ENCODE measurements at regions of chr1 and their contacts with region 1.

Region 1: DNA sequence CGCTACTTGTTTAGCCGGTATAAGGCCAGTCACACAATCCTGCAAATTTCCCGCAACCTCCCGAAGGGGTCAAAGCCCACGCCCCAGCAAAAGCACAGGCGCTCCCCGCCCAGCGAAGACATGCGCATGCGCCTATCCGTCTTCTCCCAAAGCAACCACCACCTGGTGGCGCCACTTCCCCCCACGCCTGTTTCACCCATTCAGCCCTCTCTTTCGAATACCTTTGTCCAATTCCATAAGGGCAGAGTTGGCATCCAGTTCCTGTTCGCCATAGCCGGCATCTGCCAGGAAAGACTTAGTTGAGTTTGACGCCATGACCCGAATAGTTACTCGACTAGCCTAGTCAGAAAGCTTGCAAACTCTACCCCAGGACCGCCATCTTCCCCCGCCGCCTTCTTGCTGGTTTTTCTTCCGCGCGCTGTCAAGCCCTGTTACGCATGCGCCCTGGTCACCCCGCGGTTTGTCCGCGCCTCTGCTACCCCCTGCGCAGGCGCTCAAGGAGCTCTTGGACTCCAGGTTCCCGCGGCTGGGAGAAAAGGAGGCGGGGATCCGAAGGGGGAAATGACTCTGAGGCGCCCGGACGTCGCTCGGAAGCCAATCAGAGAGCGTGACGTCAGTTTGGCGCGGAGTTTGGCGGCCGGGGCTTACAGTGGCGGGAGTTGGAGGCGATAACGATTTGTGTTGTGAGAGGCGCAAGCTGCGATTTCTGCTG is at the starts of genes DTL and INTS7:
- DNase-seq: peak; percentile 98 to 99
- ATAC-seq: peak; percentile 97 to 99 (median 98)
- H3K4me3 ChIP-seq: peak within 1 kb of the TSS; percentile 40 to 73 (median 62)
- H3K27ac ChIP-seq: peak within 1 kb of the TSS; percentile 15 to 91 (median 86)
- H3K4me1 ChIP-seq: peaks cover 2 to 62% (median 30%) of the 10 kb centered on the region in 9 donors
- H3K27me3 ChIP-seq: no peaks in the 10 kb centered on the region
- CTCF ChIP-seq: peak; percentile 83 to 99 (median 96)
- total RNA-seq, gene DTL: 0.18 to 3.0 (median 0.58) TPM
- total RNA-seq, gene INTS7: 6.6 to 11.6 (median 9.0) TPM

Region 2: DNA sequence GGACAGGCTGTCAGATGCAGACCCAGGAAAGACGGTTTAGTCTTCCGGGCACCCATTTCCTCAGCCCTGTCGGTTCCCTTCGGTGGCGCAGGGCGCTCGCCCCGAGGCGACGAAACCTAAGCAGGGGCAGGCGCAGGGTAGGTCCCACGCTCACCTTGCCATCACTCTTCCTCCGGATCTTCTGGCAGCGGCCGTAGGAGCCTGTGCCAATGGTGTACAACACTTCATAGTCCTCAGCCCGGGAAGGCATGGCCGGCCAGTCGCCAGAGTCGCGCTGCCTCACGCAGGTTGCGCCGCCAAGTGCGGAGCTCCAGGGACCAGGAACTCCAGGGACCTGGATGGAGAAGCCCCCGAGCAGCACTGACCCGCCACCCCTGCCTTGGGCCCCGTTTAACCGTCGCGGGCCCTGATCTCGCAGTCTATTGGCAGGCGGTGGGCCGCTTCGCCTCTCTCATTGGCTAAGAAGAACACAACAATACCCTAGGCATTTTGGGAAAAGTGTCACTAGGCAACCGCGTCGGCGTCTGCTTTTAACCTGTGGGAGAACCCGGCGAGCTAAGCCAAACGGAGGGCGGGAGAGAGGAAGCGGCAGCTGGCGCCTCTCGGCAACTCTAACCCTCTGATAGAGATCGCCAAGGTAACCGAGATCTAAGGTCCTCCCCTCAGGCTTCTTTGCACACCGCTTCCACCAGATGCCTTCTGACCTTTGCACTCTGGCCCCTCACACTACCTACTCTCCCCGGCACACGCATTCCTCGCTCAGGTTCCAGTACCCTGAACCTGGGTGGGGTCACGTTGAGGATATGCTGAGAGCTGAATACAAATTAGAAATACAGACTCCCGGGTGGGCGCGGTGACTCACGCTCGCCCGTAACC is 359.8 kb before region 1 on chr1 and contains the start of gene NEK2:
- intact Hi-C with region 1: loop called in 5 of 10 experiments (anchors 5 to 10 kb)
- DNase-seq: peak; percentile 83 to 90
- ATAC-seq: peak; percentile 96 to 99 (median 98)
- H3K4me3 ChIP-seq: peak within 1 kb of the TSS; percentile 34 to 71 (median 58)
- H3K27ac ChIP-seq: peak within 1 kb of the TSS in 1 of 10 donors; percentile 22
- H3K4me1 ChIP-seq: peaks cover 0 to 18% (median 8%) of the 10 kb centered on the region in 9 donors
- H3K27me3 ChIP-seq: no peaks in the 10 kb centered on the region
- CTCF ChIP-seq: no peak
- total RNA-seq, gene NEK2: 0.12 to 2.1 (median 0.23) TPM in 5 of 10 donors, not detected in the others

Region 3: DNA sequence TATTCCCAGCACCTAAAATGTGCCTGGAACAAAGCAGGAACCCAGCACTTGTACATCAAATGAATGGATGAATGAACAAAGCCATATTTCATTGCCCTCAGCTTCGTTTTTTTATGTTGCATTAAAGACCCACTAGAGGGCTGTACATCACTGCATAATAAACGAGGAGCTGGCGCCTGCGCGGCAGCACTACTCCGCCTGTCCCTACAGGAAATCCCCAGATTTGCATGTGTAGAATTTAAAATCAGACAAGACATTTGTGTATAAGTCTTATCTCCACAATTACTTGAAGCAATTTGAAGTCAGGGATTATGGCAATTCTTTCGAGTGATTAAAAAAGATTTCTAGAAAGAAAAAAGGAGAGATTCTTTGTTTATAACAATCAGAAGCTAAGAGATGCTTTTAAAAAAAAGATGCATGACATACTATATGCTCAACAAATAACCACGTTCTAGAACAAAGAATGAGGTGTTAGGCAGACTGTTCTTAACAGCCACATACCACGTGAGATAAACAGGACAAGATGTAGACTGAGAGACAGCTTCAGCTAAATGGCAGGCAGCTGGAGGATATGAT is 354.4 kb before region 1 on chr1:
- intact Hi-C with region 1: loop called in 5 of 10 experiments (anchors 5 to 10 kb)
- DNase-seq: peak; percentile 52
- ATAC-seq: peak; percentile 69 to 92 (median 89)
- H3K4me3 ChIP-seq: no peak overlapping the region
- H3K27ac ChIP-seq: no peak overlapping the region
- H3K4me1 ChIP-seq: peaks cover 0 to 10% (median 2%) of the 10 kb centered on the region in 9 donors
- H3K27me3 ChIP-seq: no peaks in the 10 kb centered on the region
- CTCF ChIP-seq: peak; percentile 41 to 78 (median 75)

Region 4: GRCh38 chr1:211830330-211831142 is 204.7 kb before region 1 on chr1 and contains the start of gene LPGAT1:
- intact Hi-C with region 1: loop called in 2 of 10 experiments (anchors 10 kb)
- DNase-seq: peak; percentile 77 to 82
- ATAC-seq: peak; percentile 94 to 97 (median 96)
- H3K4me3 ChIP-seq: peak within 1 kb of the TSS; percentile 63 to 80 (median 74)
- H3K27ac ChIP-seq: peak within 1 kb of the TSS; percentile 70 to 97 (median 91)
- H3K4me1 ChIP-seq: peaks cover 0 to 62% (median 18%) of the 10 kb centered on the region in 9 donors
- H3K27me3 ChIP-seq: no peaks in the 10 kb centered on the region
- CTCF ChIP-seq: peak; percentile 32 to 89 (median 73)
- total RNA-seq, gene LPGAT1: 22.1 to 36.6 (median 27.6) TPM

Region 5: DNA sequence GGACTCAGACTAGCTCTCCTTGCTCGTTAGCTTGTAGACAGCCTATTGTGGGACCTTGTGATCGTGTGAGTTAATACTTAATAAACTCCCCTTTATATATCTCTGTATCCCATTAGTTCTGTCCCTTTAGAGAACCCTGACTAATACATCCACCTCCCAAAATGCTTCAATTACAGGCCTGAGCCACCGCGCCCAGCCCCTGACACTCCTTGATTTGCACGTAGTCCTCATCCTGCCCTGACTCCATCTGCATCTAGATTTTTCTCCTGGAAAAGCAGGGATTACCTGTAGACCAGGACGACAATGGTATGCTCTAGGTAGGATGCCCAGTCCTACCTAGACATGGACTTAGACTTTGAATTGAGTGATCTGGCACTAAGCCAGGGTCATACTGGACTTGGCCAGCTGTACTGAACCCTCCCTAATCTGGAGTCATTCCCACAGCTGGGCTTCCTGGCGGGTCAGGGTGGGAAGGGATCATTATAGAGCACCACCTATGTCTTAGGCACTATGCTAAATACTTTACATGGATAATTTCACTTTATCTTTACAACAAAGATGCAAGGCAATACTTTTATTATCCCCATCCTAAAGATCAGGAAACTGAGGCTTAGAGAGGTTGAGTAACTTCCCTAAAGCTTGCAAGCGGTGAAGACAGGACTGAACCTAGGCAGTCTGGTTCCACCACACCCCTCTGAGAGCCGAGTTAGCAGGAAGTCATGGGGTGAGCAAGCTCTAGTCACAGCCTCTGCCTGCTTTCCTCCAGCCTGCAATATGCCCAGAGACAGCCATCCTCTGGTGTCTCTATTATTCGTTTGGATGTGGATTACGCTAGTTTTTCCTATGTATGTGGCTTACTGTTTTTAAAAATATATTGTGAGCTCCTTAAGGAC is 89.7 kb after region 1 on chr1:
- intact Hi-C with region 1: no loop called
- DNase-seq: peak in 1 of 2 donors; percentile 14
- ATAC-seq: peak in 7 of 8 donors; percentile 46 to 75 (median 62)
- H3K4me3 ChIP-seq: no peak overlapping the region
- H3K27ac ChIP-seq: peak overlapping the region in 1 of 10 donors; percentile 31
- H3K4me1 ChIP-seq: peaks cover 0 to 17% (median 11%) of the 10 kb centered on the region in 9 donors
- H3K27me3 ChIP-seq: no peaks in the 10 kb centered on the region
- CTCF ChIP-seq: no peak

Region 6: GRCh38 chr1:212414328-212415106 is 379.2 kb after region 1 on chr1 and contains the start of gene PACC1:
- intact Hi-C with region 1: loop called in 1 of 10 experiments (anchors 1 kb)
- DNase-seq: peak; percentile 87 to 90
- ATAC-seq: peak; percentile 95 to 98 (median 97)
- H3K4me3 ChIP-seq: peak within 1 kb of the TSS; percentile 70 to 96 (median 86)
- H3K27ac ChIP-seq: peak within 1 kb of the TSS in 8 of 10 donors; percentile 13 to 81 (median 40)
- H3K4me1 ChIP-seq: peaks cover 0 to 50% (median 7%) of the 10 kb centered on the region in 9 donors
- H3K27me3 ChIP-seq: no peaks in the 10 kb centered on the region
- CTCF ChIP-seq: peak in 2 of 9 donors; percentile 14 to 15
- total RNA-seq, gene PACC1: 1.9 to 4.6 (median 2.4) TPM

Measured in heart right ventricle (tissue), 16 donors.